ENCODE measurements at regions of chr9 and their contacts with region 1.

Region 1: GRCh38 chr9:71758785-71759184 is 9.5 kb downstream of the CEMIP2 start:
- DNase-seq: peak; percentile 32
- H3K4me3 Mint-ChIP-seq: peak overlapping the region; percentile 60
- H3K27ac Mint-ChIP-seq: peak overlapping the region; percentile 81
- H3K4me1 Mint-ChIP-seq: peaks cover 49% of the 10 kb centered on the region
- H3K27me3 Mint-ChIP-seq: no peaks in the 10 kb centered on the region
- CTCF ChIP-seq: no peak

Region 2: DNA sequence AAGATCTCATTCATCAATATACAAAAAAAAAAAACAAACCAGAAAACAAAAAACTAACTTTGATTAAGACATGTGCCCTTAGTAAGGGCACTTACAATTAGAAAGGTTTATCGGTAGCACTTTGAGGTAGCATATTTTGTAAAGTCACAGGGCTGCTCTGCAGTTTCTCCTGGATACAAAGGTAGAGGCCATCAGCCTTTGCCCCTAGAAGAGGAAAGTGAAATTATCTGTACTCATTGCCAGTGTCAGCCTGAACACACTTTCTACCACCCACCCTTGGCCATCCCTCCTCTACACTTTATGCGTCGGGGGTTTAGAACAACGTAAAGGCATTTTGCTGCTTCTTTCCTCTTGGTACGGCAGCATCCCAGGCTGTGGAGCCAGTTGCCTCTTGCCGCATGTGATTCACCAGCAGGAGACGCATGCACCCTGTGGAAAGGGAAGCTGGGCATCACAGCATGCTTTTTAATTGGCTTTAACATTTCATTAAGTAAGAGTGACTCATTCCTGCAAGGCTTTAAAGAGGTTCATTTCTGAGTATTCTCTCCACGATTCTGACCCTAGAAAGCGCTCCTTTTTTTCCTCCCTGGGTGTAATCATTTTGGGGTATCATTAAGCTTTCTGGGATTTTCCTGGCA is 75.1 kb before region 1 on chr9:
- CTCF ChIA-PET with region 1: no interaction called
- intact Hi-C with region 1: loop called (anchors 5 kb)
- DNase-seq: no peak
- H3K4me3 Mint-ChIP-seq: no peak overlapping the region
- H3K27ac Mint-ChIP-seq: peak overlapping the region; percentile 28
- H3K4me1 Mint-ChIP-seq: peaks cover 65% of the 10 kb centered on the region
- H3K27me3 Mint-ChIP-seq: no peaks in the 10 kb centered on the region
- CTCF ChIP-seq: no peak

Region 3: GRCh38 chr9:71725590-71726338 is 33.0 kb before region 1 on chr9:
- CTCF ChIA-PET with region 1: no interaction called
- intact Hi-C with region 1: loop called (anchors 5 kb)
- DNase-seq: peak; percentile 40
- H3K4me3 Mint-ChIP-seq: no peak overlapping the region
- H3K27ac Mint-ChIP-seq: no peak overlapping the region
- H3K4me1 Mint-ChIP-seq: peaks cover 33% of the 10 kb centered on the region
- H3K27me3 Mint-ChIP-seq: no peaks in the 10 kb centered on the region
- CTCF ChIP-seq: no peak

Region 4: DNA sequence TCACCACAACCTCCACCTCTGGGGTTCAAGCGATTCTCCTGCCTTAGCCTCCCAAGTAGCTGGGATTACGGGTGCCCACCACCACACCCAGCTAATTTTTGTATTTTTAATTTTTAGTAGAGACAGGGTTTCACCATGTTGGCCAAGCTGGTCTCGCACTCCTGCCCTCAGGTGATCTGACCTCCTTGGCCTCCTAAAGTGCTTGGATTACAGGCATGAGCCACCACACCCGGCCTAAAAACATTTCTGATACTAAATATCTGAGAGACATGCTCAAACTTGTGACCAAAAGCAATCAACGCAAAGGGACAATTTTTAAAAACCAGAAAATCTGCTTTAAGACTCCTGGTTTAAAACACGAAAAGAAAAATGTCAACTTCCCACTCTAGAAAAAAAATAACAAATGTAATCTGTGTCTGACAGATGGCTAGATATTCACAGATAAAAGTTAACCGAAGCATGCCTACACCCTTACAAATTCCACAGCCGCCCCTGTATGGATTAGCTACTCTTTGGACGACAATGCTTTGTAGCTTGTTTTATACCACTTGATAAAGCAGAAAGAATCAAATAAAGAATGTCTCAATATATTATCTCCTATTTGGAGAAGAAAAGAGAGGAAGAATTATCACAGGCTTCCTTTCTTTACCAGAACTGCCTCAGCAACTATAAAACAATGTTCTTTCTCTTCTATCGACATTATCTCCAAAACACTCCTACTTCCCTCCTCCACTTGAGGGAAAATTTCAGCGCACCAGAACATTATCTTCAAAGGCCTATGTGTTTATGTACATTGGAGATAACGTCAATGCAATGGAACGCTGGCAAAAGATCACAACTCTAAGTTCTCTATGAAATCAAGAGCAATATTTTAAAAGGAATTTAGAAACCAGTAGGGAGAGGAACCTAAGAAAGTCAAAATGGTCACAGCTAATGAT is 16.8 kb before region 1 on chr9:
- CTCF ChIA-PET with region 1: interaction called, 3 read pairs
- intact Hi-C with region 1: loop called (anchors 2 kb)
- DNase-seq: no peak
- H3K4me3 Mint-ChIP-seq: peak overlapping the region; percentile 59
- H3K27ac Mint-ChIP-seq: peak overlapping the region; percentile 82
- H3K4me1 Mint-ChIP-seq: peaks cover 45% of the 10 kb centered on the region
- H3K27me3 Mint-ChIP-seq: no peaks in the 10 kb centered on the region
- CTCF ChIP-seq: no peak

Region 5: GRCh38 chr9:72038890-72039410 is 280.2 kb after region 1 on chr9:
- CTCF ChIA-PET with region 1: no interaction called
- intact Hi-C with region 1: no loop called
- DNase-seq: peak; percentile 72
- H3K4me3 Mint-ChIP-seq: no peak overlapping the region
- H3K27ac Mint-ChIP-seq: peak overlapping the region; percentile 72
- H3K4me1 Mint-ChIP-seq: peaks cover 34% of the 10 kb centered on the region
- H3K27me3 Mint-ChIP-seq: no peaks in the 10 kb centered on the region
- CTCF ChIP-seq: peak; percentile 87

Measured in Calu3 (cell line).